ENCODE measurements at regions of chr3 and their contacts with region 1.

Region 1: GRCh38 chr3:72447059-72447946 is 400.9 kb downstream of the SHQ1 start:
- DNase-seq: peak; percentile 92 to 96
- ATAC-seq: peak; percentile 95 to 100 (median 97)
- H3K4me3 ChIP-seq: peak overlapping the region; percentile 52 to 89 (median 78)
- H3K27ac ChIP-seq: peak overlapping the region; percentile 74 to 93 (median 88)
- H3K4me1 ChIP-seq: peaks cover 0 to 45% (median 34%) of the 10 kb centered on the region in 9 donors
- H3K27me3 ChIP-seq: peaks cover 0 to 9% (median 0%) of the 10 kb centered on the region in 7 donors
- CTCF ChIP-seq: no peak

Region 2: DNA sequence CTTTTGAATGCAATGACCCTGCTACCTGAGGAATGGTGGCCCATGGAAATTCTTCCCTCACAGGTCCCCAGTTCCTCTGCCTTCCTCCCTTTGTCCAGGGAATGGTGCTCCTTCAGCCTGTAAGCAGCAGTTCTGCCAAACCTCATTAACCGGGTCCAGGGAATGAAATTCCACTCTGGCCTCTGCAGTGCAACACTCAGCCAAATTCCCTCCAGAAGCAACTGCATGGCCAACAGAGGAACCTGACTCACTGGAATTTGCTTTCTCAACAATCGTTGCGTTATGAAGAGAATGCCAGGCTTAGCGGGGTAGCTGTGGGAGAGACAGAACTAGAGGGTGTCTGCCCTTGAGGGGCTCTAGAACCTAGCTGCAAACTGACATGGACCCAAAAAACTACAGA is 212.9 kb before region 1 on chr3:
- intact Hi-C with region 1: no loop called
- DNase-seq: no peak
- ATAC-seq: peak in 7 of 8 donors; percentile 31 to 89 (median 57)
- H3K4me3 ChIP-seq: no peak overlapping the region
- H3K27ac ChIP-seq: no peak overlapping the region
- H3K4me1 ChIP-seq: peaks cover 0 to 18% (median 0%) of the 10 kb centered on the region in 9 donors
- H3K27me3 ChIP-seq: peaks cover 0 to 5% (median 0%) of the 10 kb centered on the region in 7 donors
- CTCF ChIP-seq: no peak

Region 3: DNA sequence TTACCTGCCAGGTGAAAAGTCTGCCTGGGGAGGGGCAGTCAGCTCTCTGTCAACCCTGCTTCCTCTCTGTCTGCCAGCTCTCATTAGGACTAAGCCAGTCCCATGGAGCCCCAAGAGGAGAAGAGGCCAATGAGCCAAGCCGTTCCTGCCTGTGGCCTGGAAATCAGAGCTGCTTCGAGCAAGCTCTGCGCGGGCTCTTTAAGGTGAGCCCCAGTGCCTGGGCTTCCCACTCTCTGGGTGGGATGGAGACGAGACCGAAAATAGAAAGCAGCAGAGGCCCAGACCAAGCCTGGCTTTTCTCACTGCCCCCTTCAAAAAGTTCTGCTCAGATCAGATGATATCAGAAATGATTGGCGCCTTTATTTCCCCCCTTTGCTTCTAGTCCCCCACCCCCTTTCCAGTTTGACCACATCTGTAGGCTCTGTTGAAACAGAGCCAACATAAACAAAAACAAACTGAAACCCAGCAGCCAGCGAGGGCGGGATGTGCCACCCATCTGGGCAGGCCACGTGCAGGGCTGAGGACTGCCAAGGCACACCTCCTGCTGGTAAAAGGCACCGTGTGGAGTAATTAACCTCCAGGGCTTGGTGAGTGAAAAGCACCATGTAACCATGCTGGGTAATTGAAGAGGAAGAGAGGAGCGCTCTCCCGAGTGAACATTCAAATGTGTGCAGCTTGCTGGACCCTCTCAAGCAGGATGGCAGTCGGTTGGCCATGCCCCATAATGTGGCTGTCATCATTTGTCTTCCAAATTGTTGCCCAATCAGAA is 191.3 kb before region 1 on chr3:
- intact Hi-C with region 1: loop called in 1 of 10 experiments (anchors 10 kb)
- DNase-seq: peak in 1 of 2 donors; percentile 26
- ATAC-seq: peak; percentile 51 to 86 (median 76)
- H3K4me3 ChIP-seq: no peak overlapping the region
- H3K27ac ChIP-seq: peak overlapping the region in 2 of 10 donors; percentile 4 to 19
- H3K4me1 ChIP-seq: peaks cover 5 to 32% (median 27%) of the 10 kb centered on the region in 9 donors
- H3K27me3 ChIP-seq: peaks cover 0 to 4% (median 0%) of the 10 kb centered on the region in 7 donors
- CTCF ChIP-seq: peak in 1 of 9 donors; percentile 16

Region 4: DNA sequence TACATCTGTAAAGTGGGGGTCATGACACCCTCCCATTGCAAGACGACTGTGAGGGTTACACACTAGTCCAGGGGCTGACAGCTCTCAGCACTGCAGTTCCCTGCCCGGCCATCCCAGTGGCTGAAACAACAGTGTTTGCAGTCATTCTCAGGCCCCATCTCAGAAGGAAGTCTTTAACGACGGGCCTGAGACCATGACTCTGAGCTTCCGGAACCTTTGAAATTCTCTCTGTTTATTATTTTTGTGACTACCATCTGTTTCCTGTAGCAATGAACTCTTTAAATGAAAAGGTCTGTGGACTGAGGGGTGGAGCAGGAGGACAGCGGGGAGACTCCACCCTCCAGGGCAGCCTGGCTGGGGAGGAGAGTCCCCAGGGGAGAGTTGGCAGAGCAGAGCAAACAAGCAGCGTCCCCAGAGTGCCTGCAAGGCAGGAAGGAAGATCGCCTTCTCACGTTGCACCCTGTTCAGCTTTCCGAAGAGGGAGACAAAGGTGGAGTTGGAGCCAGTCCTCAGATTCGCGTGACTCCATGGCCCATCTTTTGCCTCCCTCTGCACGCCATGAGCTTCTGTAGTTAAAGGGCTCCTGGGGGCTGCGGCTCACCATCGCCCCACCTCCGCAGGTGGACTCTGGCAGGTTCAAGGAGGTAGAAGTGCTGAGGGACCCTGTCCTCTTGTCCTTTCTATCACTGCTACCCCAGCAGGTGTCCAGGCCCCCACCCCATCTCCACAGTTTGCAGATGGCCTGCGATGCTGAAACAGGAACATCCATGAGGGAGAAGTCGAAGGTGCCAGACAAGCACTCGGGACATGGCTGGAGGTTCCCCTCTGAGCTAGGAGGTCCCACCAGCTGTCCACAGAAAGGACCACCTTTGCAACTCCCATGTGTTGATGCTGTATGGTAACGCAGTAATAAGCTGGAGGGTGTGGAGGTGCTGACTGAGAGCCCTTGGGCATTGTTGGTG is 136.6 kb before region 1 on chr3:
- intact Hi-C with region 1: loop called in 2 of 10 experiments (anchors 10 kb)
- DNase-seq: peak; percentile 26 to 43
- ATAC-seq: peak; percentile 76 to 90 (median 82)
- H3K4me3 ChIP-seq: no peak overlapping the region
- H3K27ac ChIP-seq: peak overlapping the region in 5 of 10 donors; percentile 3 to 71 (median 23)
- H3K4me1 ChIP-seq: peaks cover 0 to 23% (median 21%) of the 10 kb centered on the region in 9 donors
- H3K27me3 ChIP-seq: no peaks in the 10 kb centered on the region
- CTCF ChIP-seq: no peak

Region 5: GRCh38 chr3:72482589-72483321 is 35.5 kb after region 1 on chr3:
- intact Hi-C with region 1: loop called in 2 of 10 experiments (anchors 5 kb)
- DNase-seq: peak; percentile 57 to 82
- ATAC-seq: peak; percentile 74 to 93 (median 90)
- H3K4me3 ChIP-seq: peak overlapping the region in 8 of 10 donors; percentile 16 to 44 (median 37)
- H3K27ac ChIP-seq: peak overlapping the region in 8 of 10 donors; percentile 13 to 86 (median 72)
- H3K4me1 ChIP-seq: peaks cover 3 to 45% (median 20%) of the 10 kb centered on the region in 9 donors
- H3K27me3 ChIP-seq: no peaks in the 10 kb centered on the region
- CTCF ChIP-seq: no peak

Measured in heart right ventricle (tissue), 16 donors.